Natural killer cell (primary cell): ENCODE measurements at regions of chr17 and their contacts with region 1.

Region 1: GRCh38 chr17:48024937-48025906 is 12.4 kb downstream of the COPZ2 start:
- DNase-seq: peak; percentile 93 to 99
- ATAC-seq: peak; percentile 91 to 98 (median 94)
- H3K4me3 ChIP-seq: peak overlapping the region; percentile 29
- H3K4me3 Mint-ChIP-seq: peak overlapping the region; percentile 94
- H3K27ac ChIP-seq: no peak overlapping the region
- H3K27ac Mint-ChIP-seq: peak overlapping the region; percentile 75 to 86
- H3K4me1 ChIP-seq: peaks cover 36% of the 10 kb centered on the region
- H3K4me1 Mint-ChIP-seq: peaks cover 34% of the 10 kb centered on the region in 2 donors
- H3K27me3 ChIP-seq: peaks cover 17% of the 10 kb centered on the region
- H3K27me3 Mint-ChIP-seq: peaks cover 30 to 42% of the 10 kb centered on the region in 2 donors
- CTCF ChIP-seq: peak; percentile 76

Region 2: GRCh38 chr17:48074315-48075081 is 49.3 kb after region 1 on chr17:
- intact Hi-C with region 1: loop called (anchors 1 kb)
- DNase-seq: peak; percentile 57 to 86
- ATAC-seq: peak; percentile 78 to 92 (median 86)
- H3K4me3 ChIP-seq: no peak overlapping the region
- H3K4me3 Mint-ChIP-seq: no peak overlapping the region
- H3K27ac ChIP-seq: no peak overlapping the region
- H3K27ac Mint-ChIP-seq: no peak overlapping the region
- H3K4me1 ChIP-seq: no peaks in the 10 kb centered on the region
- H3K4me1 Mint-ChIP-seq: no peaks in the 10 kb centered on the region
- H3K27me3 ChIP-seq: no peaks in the 10 kb centered on the region
- H3K27me3 Mint-ChIP-seq: no peaks in the 10 kb centered on the region
- CTCF ChIP-seq: peak; percentile 82

Region 3: DNA sequence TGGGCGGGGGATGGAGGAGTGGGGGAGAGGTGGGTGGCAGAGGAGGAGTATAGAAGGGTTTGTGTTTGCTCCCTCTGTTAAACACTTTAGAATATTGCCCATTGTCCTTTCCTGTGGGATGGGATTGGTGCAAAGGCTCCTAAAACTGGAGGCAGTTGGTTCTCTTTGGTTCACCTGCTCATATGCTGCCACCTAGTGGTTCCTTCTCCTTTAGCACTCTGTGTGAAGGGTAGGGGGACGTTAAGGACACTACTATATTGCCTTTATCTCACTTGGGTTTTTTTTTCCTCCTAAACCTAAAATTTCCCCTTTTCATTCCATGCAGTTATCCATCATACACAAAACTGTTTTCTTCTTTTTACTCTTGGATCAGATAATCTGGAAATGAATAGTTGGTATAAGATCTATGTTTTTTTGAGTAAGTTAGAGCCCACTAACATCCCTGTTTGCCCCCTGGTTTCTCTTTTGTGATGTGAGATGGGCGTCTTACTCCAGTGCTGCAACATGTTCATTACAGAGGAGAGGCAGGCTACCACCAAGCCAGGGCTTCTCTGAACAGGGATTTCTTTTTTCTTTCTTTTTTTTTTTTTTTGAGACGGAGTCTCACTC is 106.1 kb after region 1 on chr17:
- intact Hi-C with region 1: loop called (anchors 1 kb)
- DNase-seq: peak in 1 of 2 donors; percentile 82
- ATAC-seq: peak; percentile 65 to 85 (median 71)
- H3K4me3 ChIP-seq: no peak overlapping the region
- H3K4me3 Mint-ChIP-seq: no peak overlapping the region
- H3K27ac ChIP-seq: no peak overlapping the region
- H3K27ac Mint-ChIP-seq: peak overlapping the region; percentile 40 to 45
- H3K4me1 ChIP-seq: no peaks in the 10 kb centered on the region
- H3K4me1 Mint-ChIP-seq: peaks cover 0 to 6% of the 10 kb centered on the region in 2 donors
- H3K27me3 ChIP-seq: no peaks in the 10 kb centered on the region
- H3K27me3 Mint-ChIP-seq: no peaks in the 10 kb centered on the region
- CTCF ChIP-seq: peak; percentile 80

Region 4: GRCh38 chr17:48162946-48163506 is 137.8 kb after region 1 on chr17:
- intact Hi-C with region 1: no loop called
- DNase-seq: no peak
- ATAC-seq: no peak
- H3K4me3 ChIP-seq: no peak overlapping the region
- H3K4me3 Mint-ChIP-seq: no peak overlapping the region
- H3K27ac ChIP-seq: no peak overlapping the region
- H3K27ac Mint-ChIP-seq: peak overlapping the region; percentile 53 to 54
- H3K4me1 ChIP-seq: no peaks in the 10 kb centered on the region
- H3K4me1 Mint-ChIP-seq: peaks cover 10 to 12% of the 10 kb centered on the region in 2 donors
- H3K27me3 ChIP-seq: no peaks in the 10 kb centered on the region
- H3K27me3 Mint-ChIP-seq: no peaks in the 10 kb centered on the region
- CTCF ChIP-seq: no peak

Region 5: DNA sequence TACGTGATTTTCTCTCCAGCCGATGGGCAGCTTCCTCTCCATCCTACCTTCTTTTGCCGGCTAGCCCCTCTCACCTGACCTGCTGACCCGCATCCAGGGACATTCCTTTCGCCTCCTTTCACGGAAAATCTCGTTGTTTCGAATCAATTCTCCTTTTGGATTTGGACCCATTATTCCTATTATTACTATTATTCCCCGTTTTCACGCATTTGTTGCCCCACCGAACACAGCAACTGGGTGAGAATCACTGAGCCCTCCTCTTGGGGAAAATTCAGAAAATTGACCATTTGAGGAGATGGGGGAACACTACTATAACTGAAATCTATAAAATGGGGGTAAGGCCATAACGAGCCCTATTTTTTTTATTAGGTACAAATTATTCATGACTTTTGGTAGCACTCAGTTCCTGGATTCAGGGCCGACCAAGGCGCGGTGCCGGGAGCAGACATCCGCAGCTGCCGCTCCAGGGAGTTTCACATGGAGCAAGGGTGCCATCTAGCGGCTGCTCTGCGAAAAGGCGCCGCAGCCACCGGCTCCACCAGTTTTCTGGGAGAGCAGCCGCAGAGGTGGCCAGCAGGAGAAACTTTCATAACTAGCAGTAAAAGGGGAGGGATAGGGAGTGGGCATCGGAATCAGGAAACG is 593.2 kb after region 1 on chr17:
- intact Hi-C with region 1: loop called (anchors 2 kb)
- DNase-seq: peak; percentile 82 to 92
- ATAC-seq: peak; percentile 79 to 82 (median 81)
- H3K4me3 ChIP-seq: no peak overlapping the region
- H3K4me3 Mint-ChIP-seq: peak overlapping the region; percentile 45
- H3K27ac ChIP-seq: no peak overlapping the region
- H3K27ac Mint-ChIP-seq: peak overlapping the region in 1 of 2 donors; percentile 69
- H3K4me1 ChIP-seq: peaks cover 34% of the 10 kb centered on the region
- H3K4me1 Mint-ChIP-seq: peaks cover 28 to 43% of the 10 kb centered on the region in 2 donors
- H3K27me3 ChIP-seq: peaks cover 82% of the 10 kb centered on the region
- H3K27me3 Mint-ChIP-seq: peaks cover 79 to 95% of the 10 kb centered on the region in 2 donors
- CTCF ChIP-seq: peak; percentile 99